ENCODE measurements at regions of chr3 and their contacts with region 1.

Region 1: GRCh38 chr3:159616212-159616825 is 372.3 kb upstream of the IL12A start:
- DNase-seq: peak; percentile 78
- ATAC-seq: peak; percentile 57
- H3K4me3 ChIP-seq: no peak overlapping the region
- H3K27ac ChIP-seq: no peak overlapping the region
- H3K4me1 ChIP-seq: peaks cover 26% of the 10 kb centered on the region
- H3K27me3 ChIP-seq: no peaks in the 10 kb centered on the region
- CTCF ChIP-seq: peak; percentile 70

Region 2: DNA sequence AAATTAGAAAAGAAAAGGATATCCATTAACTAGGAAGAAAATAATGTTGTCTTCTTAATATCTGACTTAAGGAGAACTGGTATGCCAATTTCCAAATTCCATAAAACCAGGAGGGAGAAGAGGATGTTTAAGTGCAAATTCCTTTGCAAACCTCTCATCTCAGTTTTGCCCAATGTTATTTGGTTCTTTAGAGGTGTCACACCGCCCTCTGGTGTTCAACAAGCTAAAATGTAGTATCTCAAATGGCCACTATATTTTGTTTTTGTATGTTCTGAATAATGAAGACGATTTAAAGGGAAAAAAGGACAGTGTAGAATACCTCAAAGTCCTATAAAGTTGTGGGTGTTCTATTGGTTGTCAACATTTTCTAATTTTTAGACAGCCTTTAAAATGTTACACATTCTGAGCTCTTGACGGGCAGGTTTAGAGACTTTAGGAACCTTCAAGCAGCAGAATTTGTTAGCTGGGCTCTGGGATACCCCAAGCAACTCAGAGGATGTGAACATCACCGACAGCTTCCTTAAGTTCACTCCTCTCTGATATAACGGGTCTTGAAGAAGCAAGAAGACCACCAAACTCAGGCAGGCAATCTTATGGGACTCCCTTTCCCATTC is 356.2 kb before region 1 on chr3:
- CTCF ChIA-PET with region 1: no interaction called
- POLR2A ChIA-PET with region 1: no interaction called
- intact Hi-C with region 1: loop called (anchors 10 kb)
- DNase-seq: peak; percentile 81
- ATAC-seq: peak; percentile 61
- H3K4me3 ChIP-seq: no peak overlapping the region
- H3K27ac ChIP-seq: no peak overlapping the region
- H3K4me1 ChIP-seq: no peaks in the 10 kb centered on the region
- H3K27me3 ChIP-seq: no peaks in the 10 kb centered on the region
- CTCF ChIP-seq: peak; percentile 90

Region 3: DNA sequence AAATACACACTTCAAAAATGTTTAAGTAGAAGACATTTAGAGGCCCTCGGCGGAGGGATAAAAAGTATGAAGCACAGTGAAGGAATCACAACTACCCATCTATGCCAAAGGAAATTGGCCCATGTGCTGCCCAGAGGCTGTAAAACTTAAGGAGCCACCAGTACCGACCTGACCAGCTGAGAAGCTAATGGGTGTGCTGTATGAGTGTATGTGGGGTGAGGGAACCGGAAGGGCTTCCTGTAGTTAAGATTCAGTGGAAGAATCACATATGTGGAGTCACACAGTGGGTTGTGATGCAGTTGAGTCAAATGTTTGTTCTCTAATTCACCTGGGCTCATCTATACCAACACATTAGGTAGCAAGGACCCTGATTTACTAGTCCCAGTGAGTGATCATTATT is 143.7 kb before region 1 on chr3:
- CTCF ChIA-PET with region 1: no interaction called
- POLR2A ChIA-PET with region 1: no interaction called
- intact Hi-C with region 1: no loop called
- DNase-seq: peak; percentile 17
- ATAC-seq: no peak
- H3K4me3 ChIP-seq: no peak overlapping the region
- H3K27ac ChIP-seq: no peak overlapping the region
- H3K4me1 ChIP-seq: no peaks in the 10 kb centered on the region
- H3K27me3 ChIP-seq: no peaks in the 10 kb centered on the region
- CTCF ChIP-seq: no peak

Region 4: GRCh38 chr3:159726231-159726964 is 110.1 kb after region 1 on chr3:
- CTCF ChIA-PET with region 1: no interaction called
- POLR2A ChIA-PET with region 1: no interaction called
- intact Hi-C with region 1: loop called (anchors 2 kb)
- DNase-seq: peak; percentile 97
- ATAC-seq: peak; percentile 92
- H3K4me3 ChIP-seq: peak overlapping the region; percentile 33; the same call in 1 of the 2 replicates
- H3K27ac ChIP-seq: peak overlapping the region; percentile 61
- H3K4me1 ChIP-seq: peaks cover 42% of the 10 kb centered on the region
- H3K27me3 ChIP-seq: no peaks in the 10 kb centered on the region
- CTCF ChIP-seq: no peak

Region 5: GRCh38 chr3:159872374-159873109 is 256.2 kb after region 1 on chr3:
- CTCF ChIA-PET with region 1: no interaction called
- POLR2A ChIA-PET with region 1: no interaction called
- intact Hi-C with region 1: loop called (anchors 10 kb)
- DNase-seq: peak; percentile 92
- ATAC-seq: peak; percentile 95
- H3K4me3 ChIP-seq: no peak overlapping the region
- H3K27ac ChIP-seq: peak overlapping the region; percentile 61
- H3K4me1 ChIP-seq: peaks cover 30% of the 10 kb centered on the region
- H3K27me3 ChIP-seq: no peaks in the 10 kb centered on the region
- CTCF ChIP-seq: peak; percentile 50